HEK293 (cell line): ENCODE measurements at regions of chr6 and their contacts with region 1.

Region 1: GRCh38 chr6:30781743-30782424 is 37.5 kb upstream of the IER3 start:
- H3K4me3 ChIP-seq: peak overlapping the region; percentile 33
- H3K27ac ChIP-seq: peak overlapping the region; percentile 65
- H3K4me1 ChIP-seq: peaks cover 10% of the 10 kb centered on the region; the same call in 1 of the 2 replicates
- CTCF ChIP-seq: no peak

Region 2: DNA sequence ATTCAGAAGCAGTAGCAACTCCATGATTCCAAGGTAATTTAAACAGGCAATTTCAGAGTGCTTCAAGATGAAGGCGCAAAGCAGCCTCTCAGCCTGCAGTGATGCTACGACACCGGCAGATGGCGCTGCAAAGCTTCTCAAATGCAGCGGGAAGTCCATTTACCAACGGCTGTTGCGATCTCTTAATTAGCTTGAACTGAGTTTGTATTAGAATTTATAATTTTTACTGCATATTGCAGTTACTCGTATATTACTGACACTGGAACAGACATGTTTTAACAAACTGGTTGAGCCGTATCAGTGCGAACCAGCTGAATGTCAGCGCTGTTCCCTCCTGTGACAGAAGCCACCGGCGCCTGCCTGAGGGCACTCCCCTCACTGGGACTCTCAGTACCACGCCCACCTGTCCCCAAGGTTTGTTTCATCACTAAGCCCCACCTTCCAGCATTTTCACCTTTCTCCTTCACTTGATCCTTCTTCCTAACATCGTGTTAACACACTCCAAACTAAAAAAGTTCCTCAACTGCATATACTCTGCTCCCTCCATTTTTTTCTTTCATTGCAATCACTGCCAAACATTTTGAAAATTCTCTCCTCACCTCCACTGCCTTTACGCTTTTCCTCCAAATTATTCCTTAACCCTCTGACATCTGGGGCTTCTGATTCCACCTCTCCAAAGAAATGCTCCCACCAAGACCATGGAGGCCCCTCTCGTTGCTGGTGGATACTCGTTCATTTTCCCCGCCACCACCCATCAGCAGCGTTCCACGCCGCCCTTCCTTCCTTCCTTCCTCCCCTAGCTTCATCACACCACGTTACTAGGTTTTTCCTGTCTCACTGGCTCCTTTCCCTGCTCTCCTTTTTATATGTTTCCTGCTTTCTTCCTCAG is 240.1 kb before region 1 on chr6:
- CTCF ChIA-PET with region 1: no interaction called
- POLR2A ChIA-PET with region 1: no interaction called
- H3K4me3 ChIP-seq: peak overlapping the region; percentile 34
- H3K27ac ChIP-seq: no peak overlapping the region
- H3K4me1 ChIP-seq: no peaks in the 10 kb centered on the region
- CTCF ChIP-seq: peak; percentile 79

Region 3: DNA sequence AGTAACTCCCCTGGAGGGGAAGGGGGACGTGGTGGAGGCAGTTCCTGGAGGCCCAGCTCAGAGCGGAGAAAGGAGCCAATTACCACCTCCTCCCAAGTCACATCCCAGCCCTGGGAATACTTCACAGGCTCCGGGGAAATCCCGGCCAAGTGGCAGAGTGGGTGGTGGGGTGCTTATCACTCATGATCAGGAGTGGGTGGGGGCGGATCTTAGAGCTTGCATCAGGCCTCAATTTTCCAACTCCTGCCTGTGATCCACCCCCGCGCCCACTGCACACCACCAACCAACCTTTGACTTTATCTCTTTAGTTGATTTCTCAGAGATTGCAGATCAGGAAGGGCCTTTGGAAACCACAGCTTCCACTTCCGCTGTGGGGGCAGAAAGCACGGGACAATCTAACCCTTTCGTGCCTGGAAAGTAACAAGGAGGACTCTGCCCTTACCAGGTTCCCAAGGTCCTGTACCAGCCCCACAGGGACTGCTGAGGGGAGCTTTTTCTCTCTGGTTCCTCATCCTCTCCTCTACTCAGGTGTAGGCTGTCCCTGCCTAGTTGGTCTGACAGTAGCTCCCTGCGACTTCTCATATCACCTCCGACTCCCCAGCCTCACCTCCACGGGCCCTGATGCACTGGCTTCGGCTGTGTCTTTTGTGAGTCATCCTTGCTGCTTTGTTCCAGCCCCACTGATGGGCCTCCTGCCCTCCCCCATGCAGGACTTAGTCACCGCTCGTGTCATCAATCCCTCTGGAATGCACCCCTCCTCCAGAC is 12.6 kb before region 1 on chr6:
- CTCF ChIA-PET with region 1: interaction called, 7 read pairs
- POLR2A ChIA-PET with region 1: interaction called, 64 read pairs
- H3K4me3 ChIP-seq: peak overlapping the region; percentile 19
- H3K27ac ChIP-seq: peak overlapping the region; percentile 72; the same call in 1 of the 2 replicates
- H3K4me1 ChIP-seq: peaks cover 18% of the 10 kb centered on the region
- CTCF ChIP-seq: no peak